Activated CD4-positive, alpha-beta memory T cell treated with anti-CD3 and anti-CD28 coated beads, Interleukin-2, amount 10 ng/mL, durations not matched to agents 7 days and 5 days (primary cell): ENCODE measurements at regions of chr5 and their contacts with region 1.

Region 1: DNA sequence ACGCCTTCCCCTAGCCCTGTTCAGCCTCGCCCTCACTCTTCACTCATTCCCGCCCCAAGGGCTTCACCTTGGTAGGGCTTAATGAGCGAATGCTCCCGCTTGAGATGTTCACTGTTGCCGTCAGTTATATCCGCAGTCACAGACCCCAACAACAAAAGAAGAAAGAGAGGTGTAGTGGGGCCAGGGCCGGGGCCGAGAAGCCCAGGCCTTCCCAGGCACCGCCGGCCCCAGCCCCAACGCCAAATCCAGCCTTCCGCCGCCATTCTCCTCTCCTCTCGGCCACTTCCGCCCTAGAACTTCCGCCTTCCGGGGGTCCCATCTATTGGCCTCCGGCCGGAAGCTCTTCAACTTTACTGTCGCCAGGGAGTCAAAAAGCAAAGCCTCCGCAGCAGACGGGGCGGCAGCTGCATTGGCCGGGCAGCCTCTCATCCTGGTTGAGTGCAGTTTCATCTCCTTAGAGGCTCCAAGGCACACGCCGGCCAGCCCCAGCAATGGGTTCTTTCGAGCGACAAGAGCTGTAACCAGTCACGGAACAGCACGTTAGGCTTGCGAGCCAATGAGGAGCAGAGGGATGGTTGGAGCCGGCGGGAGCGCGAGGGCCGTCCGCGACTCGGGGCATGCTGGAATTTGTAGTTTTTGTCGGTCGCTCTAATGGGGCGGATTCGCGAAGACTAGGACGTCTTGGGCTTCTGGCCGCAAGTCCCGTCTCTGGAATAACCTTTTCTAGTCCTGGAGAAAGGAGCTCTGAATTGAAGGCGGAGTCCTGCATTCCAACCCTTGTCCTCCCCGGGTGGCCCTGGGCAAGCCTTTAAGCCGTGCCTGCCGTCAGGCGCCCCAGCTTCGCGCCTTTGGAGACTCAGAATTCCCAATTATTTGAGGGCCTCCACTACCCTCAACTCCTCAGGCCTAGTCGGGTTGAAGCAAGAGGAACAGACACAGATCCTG is at the start of gene LMAN2:
- DNase-seq: peak; percentile 94
- H3K4me3 Mint-ChIP-seq: peak within 1 kb of the TSS; percentile 90
- H3K27ac Mint-ChIP-seq: peak within 1 kb of the TSS; percentile 99
- H3K4me1 Mint-ChIP-seq: peaks cover 70% of the 10 kb centered on the region
- H3K27me3 Mint-ChIP-seq: no peaks in the 10 kb centered on the region
- total RNA-seq, gene LMAN2: 145 to 149 TPM

Region 2: DNA sequence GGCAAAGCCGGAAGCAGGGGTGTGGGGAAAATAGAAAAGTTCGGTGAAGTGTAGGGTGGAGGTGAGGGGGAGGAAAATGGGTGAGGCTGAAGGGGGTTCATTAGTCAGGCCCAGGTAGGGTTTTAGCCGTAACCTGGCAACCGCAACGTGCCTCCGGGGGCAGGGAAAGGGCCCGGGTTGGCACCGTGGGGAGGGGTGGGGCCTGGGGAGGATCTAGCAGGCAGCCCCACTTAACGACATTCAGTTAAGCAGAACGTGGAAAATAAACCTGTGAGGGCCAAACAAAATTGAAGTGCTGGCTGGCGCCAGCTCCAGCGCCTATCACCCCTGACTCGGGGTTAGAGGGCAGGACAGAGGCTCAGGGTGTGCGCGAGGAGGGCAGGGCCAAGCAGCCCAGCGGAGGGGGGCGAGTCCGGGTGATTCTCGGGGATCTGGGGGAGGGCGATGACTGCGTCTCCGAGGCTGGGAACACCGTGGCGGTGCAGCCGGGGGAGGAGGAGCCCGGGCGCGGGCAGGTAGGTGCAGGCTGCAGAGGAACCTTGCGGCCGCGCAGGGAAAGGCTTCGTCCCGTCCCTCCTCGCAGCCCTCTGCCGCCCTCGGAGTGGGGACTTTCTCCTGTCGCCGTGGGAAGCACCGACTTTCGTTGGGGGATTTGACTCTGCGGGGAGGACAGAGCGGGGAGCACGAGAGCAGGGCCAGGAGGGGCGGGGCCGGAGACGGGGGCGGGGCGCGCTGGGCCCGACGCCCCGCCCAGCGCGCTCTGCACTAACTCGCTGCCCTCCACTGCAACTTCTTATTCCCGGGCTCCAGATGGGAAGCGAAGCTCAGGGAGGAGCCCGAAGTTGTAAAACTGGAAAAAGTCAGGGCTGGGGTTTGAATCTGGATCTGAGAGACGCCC is 11.2 kb after region 1 on chr5:
- CTCF ChIA-PET with region 1: interaction called, 7 read pairs
- POLR2A ChIA-PET with region 1: interaction called, 37 read pairs
- DNase-seq: peak; percentile 57
- H3K4me3 Mint-ChIP-seq: peak overlapping the region; percentile 66
- H3K27ac Mint-ChIP-seq: no peak overlapping the region
- H3K4me1 Mint-ChIP-seq: peaks cover 72% of the 10 kb centered on the region
- H3K27me3 Mint-ChIP-seq: no peaks in the 10 kb centered on the region

Region 3: GRCh38 chr5:177378884-177379883 is 27.5 kb after region 1 on chr5:
- CTCF ChIA-PET with region 1: no interaction called
- POLR2A ChIA-PET with region 1: interaction called, 62 read pairs
- DNase-seq: no peak
- H3K4me3 Mint-ChIP-seq: no peak overlapping the region
- H3K27ac Mint-ChIP-seq: no peak overlapping the region
- H3K4me1 Mint-ChIP-seq: peaks cover 35% of the 10 kb centered on the region
- H3K27me3 Mint-ChIP-seq: peaks cover 6% of the 10 kb centered on the region

Region 4: DNA sequence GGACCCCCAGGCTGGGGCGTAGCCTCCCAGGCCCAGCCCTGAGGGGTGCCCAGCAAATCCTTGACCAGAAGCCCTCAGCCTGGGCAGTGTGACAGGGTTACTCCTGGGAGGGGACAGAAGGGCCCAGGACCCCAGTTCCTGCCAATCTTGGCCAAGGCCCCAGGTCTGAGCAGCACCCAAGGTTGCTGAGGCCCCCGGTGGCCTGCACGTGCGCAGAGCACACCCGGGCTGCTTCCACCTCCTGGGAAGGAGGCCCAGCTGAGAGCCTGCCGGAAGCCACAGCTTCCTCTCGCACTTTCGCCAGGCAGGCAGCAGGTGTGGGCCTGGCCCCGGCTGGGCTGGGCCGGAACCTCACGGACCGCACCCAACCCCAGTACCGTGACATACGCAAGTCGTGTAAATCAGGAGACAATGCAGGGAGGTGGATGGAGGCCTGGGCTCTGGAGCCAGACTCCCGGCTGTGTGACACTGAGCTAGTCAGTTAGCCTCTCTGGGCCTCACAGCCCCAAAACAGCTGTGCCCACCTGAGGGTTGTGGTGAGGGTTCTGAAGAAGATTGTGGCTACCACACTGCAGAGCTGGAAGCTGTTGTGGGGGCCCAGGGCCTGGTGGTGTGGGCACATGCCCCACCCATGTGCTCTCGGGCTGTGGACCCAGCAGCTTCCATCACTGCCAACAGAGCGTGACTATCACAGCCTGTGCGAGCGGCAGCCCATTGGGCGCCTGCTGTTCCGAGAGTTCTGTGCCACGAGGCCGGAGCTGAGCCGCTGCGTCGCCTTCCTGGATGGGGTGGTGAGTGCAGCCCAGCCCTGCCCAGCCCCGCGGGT is 79.9 kb after region 1 on chr5:
- CTCF ChIA-PET with region 1: no interaction called
- POLR2A ChIA-PET with region 1: interaction called, 23 read pairs
- DNase-seq: peak; percentile 89
- H3K4me3 Mint-ChIP-seq: peak overlapping the region; percentile 91
- H3K27ac Mint-ChIP-seq: peak overlapping the region; percentile 93
- H3K4me1 Mint-ChIP-seq: peaks cover 72% of the 10 kb centered on the region
- H3K27me3 Mint-ChIP-seq: no peaks in the 10 kb centered on the region

Region 5: GRCh38 chr5:177554474-177555111 is 202.9 kb after region 1 on chr5 and contains the start of gene FAM193B:
- CTCF ChIA-PET with region 1: no interaction called
- POLR2A ChIA-PET with region 1: no interaction called
- DNase-seq: peak; percentile 96
- H3K4me3 Mint-ChIP-seq: peak within 1 kb of the TSS; percentile 77
- H3K27ac Mint-ChIP-seq: peak within 1 kb of the TSS; percentile 56
- H3K4me1 Mint-ChIP-seq: peaks cover 49% of the 10 kb centered on the region
- H3K27me3 Mint-ChIP-seq: no peaks in the 10 kb centered on the region
- total RNA-seq, gene FAM193B: 110 to 112 TPM